GM10248 (cell line): ENCODE measurements at regions of chr7 and their contacts with region 1.

Region 1: DNA sequence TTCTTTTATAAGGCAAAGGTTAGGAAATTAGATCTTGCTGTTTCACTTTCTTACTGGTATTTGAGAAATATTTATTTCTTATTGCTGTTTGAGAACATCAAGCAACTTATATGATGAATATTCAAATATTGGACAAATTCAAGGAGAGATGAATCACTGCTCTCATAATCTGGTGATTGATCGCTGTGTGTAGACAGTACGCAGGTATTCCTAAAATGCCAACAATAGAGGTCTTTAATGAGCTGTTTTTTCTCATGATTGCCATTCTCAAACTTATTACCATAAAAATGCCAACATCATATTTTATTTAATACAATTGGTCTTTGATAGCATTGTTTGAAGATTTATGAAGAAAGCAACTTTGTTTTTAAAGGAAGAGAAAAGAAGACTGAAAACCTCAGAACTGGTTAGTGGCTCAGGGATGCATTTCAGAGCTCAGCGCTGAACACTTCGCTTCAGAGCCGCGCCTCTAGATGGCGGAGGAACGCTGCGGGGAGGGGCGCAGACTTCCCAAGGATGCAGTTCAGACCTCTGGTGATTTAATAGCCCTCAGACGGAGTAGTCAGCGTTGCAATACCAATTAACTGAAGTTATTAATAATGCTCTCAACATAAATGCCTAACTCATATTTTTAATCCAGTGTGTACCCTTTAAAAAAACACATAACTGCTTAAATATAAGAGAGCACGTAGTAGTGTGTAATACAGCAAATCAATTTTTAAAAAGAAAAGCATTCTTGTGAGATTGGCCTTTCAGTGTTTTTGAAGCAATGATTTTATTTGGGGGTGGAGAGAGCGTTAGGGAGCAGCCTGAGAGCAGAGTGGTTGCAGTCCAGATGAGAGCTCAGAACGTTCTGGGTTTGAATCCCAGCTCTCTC is 38.5 kb upstream of the STEAP4 start:
- DNase-seq: no peak
- CTCF ChIP-seq: peak; percentile 57

Region 2: GRCh38 chr7:87858417-87859100 is 486.6 kb before region 1 on chr7:
- CTCF ChIA-PET with region 1: no interaction called
- POLR2A ChIA-PET with region 1: no interaction called
- DNase-seq: no peak
- CTCF ChIP-seq: no peak

Region 3: GRCh38 chr7:88357781-88358525 is 12.8 kb after region 1 on chr7:
- CTCF ChIA-PET with region 1: interaction called, 30 read pairs
- POLR2A ChIA-PET with region 1: no interaction called
- DNase-seq: no peak
- CTCF ChIP-seq: peak; percentile 68